ENCODE measurements at regions of chr9 and their contacts with region 1.

Region 1: GRCh38 chr9:77648234-77649120 is at the start of gene GNA14:
- DNase-seq: peak; percentile 83
- ATAC-seq: peak; percentile 82 to 89
- total RNA-seq, gene GNA14: 4.2 to 5.5 TPM

Region 2: DNA sequence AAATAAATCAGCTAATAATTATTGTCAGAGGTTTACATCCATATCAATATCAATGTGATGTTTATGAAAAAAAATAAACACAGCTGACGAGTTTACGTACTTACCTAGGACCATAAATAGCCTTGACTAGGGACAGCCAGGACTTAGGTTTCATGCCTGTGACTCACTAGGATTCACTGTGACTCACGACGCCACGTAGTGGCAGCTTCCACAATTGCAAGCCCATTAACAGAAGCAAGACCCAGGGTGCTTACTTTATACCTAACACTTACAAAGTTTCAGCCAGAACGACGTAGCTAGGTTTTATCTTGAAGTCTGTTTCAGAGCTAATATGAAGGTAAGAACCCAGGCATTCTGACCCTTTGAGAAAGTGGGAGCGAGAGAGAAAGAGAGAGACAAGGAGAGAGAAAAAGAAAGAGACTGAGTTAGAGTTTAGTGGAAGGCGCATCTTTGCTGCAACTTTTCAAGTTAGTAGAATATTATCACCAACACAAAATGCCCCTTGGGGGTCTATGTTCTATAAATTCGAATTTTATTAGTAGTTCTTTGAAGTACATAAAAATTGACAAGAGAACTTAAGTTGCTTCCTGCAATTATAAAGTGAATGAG is 191.5 kb before region 1 on chr9:
- intact Hi-C with region 1: loop called in 1 of 2 experiments (anchors 10 kb)
- DNase-seq: peak; percentile 84
- ATAC-seq: peak; percentile 73 to 92

Region 3: GRCh38 chr9:77764894-77765780 is 116.7 kb after region 1 on chr9:
- intact Hi-C with region 1: no loop called
- DNase-seq: no peak
- ATAC-seq: no peak